Posterior cingulate gyrus (tissue), 11 donors: ENCODE measurements at regions of chrX and their contacts with region 1.

Region 1: GRCh38 chrX:18899796-18900447 is 84.0 kb downstream of the PHKA2 start:
- DNase-seq: peak in 6 of 10 donors; percentile 29 to 92 (median 57)

Region 2: GRCh38 chrX:18390941-18391538 is 508.9 kb before region 1 on chrX:
- intact Hi-C with region 1: loop called (anchors 5 kb)
- DNase-seq: peak in 7 of 10 donors; percentile 39 to 89 (median 60)

Region 3: DNA sequence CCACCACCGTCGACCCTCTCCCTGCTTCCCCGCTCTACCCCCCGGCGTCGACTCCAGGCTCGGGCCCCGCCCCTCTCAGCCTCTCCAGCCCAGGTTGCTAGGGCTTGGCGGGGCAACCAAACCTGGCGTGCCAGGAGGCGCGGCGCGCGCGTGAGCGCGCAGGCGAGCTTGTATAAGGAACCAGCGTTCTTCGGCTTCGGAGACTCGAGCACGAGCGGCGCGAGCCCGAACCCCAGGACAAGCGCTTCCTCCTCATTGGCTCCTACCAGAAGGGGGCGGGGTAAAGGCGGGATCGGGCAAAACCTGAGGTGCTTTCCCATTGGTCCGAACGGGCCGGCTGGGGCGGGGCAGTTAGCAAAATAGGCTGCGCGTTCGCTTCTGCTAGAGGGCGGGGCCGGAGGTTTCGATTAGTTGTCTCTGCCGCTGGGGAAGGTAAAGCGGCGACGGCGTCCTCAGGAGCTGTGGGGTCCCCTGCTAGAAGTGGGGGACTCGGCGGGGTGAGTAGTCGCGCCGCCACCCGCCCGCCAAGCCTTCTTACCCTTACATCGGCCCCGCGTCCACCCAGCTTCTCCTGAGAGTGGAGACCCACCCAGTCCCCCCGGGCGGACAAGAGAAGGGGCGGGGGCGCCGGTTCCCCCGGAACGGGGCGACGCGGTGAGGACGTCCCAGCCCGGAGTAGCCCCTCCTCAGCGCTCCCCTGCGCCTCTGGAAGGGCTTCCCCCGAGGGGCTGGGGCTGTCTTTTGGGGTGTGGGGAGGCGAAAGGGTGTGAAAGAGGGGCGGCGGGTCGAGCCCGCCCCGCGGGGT is 474.5 kb before region 1 on chrX and contains the start of gene CDKL5:
- intact Hi-C with region 1: loop called (anchors 10 kb)
- DNase-seq: peak; percentile 91 to 99 (median 94)